HCT116 (cell line): ENCODE measurements at regions of chr9 and their contacts with region 1.

Region 1: DNA sequence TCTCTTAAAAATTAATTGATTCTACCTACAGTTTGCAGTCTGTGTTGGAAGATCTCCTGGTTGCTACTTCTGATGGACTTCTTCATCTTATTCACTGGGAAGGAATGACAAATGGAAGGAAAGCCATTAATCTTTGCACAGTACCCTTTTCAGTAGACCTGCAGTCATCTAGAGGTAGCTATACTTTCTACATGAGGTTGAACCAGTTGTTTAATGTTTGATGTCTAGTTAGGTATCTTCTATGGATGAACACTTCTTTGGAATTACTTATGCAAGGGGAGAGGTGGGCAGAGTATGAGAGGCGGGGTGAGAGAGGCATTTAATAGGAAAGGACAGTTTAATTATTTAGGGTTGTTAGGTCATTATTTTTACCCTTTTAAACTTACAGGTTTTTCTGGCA is 91.2 kb downstream of the RIC1 start:
- DNase-seq: no peak
- ATAC-seq: no peak
- H3K4me3 ChIP-seq: no peak overlapping the region
- H3K27ac ChIP-seq: no peak overlapping the region
- H3K4me1 ChIP-seq: no peaks in the 10 kb centered on the region
- H3K27me3 ChIP-seq: no peaks in the 10 kb centered on the region
- CTCF ChIP-seq: no peak
- POLR2A ChIP-seq: no peak
- RAD21 ChIP-seq: no peak

Region 2: GRCh38 chr9:5735072-5735471 is 14.9 kb after region 1 on chr9:
- CTCF ChIA-PET with region 1: no interaction called
- POLR2A ChIA-PET with region 1: no interaction called
- RAD21 ChIA-PET with region 1: no interaction called
- intact Hi-C with region 1: loop called (anchors 1 kb)
- DNase-seq: no peak
- ATAC-seq: no peak
- H3K4me3 ChIP-seq: no peak overlapping the region
- H3K27ac ChIP-seq: no peak overlapping the region
- H3K4me1 ChIP-seq: no peaks in the 10 kb centered on the region
- H3K27me3 ChIP-seq: no peaks in the 10 kb centered on the region
- CTCF ChIP-seq: no peak
- POLR2A ChIP-seq: no peak
- RAD21 ChIP-seq: no peak

Region 3: DNA sequence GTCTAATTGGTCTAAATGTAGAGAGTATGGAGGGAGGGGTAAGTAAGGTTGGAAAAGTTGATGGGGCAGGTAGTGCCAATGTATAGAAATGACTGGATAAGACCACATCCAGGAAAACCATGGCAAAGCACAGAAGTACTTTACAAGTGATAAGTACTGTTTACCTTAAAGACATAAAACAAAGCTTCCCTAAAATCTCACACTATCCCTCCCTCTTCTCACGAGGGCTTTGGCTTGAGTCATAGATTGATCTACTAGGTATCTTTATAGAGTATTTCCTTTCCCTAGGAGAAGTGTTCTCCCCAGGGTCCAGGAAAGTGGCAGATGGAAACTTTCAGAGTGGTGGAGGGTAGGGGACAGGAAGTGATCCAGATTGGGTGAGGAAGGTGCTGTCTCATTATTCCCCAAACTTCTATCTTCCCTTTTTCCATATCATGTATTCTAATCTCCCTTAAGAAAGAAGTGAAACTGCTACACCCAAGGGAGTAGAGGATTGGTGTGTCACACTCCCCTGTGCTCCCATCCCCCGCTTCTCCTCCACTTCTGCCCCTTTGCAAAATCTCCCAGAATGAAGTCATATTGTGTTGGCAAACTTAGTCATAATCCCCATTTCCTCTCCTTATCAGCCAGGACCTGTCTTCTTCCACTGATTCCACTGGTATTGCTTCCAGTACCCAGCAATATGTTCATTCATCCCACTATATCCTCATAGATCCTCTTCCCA is 510.0 kb after region 1 on chr9:
- CTCF ChIA-PET with region 1: no interaction called
- POLR2A ChIA-PET with region 1: no interaction called
- RAD21 ChIA-PET with region 1: no interaction called
- intact Hi-C with region 1: no loop called
- DNase-seq: no peak
- ATAC-seq: no peak
- H3K4me3 ChIP-seq: no peak overlapping the region
- H3K27ac ChIP-seq: no peak overlapping the region
- H3K4me1 ChIP-seq: no peaks in the 10 kb centered on the region
- H3K27me3 ChIP-seq: no peaks in the 10 kb centered on the region
- CTCF ChIP-seq: no peak
- POLR2A ChIP-seq: no peak
- RAD21 ChIP-seq: no peak